ENCODE measurements at regions of chr10 and their contacts with region 1.

Region 1: GRCh38 chr10:61992671-61993668 is 91.5 kb downstream of the ARID5B start:
- DNase-seq: peak; percentile 74
- ATAC-seq: peak; percentile 50
- H3K4me3 Mint-ChIP-seq: peak overlapping the region; percentile 64
- H3K27ac Mint-ChIP-seq: peak overlapping the region; percentile 95
- H3K4me1 Mint-ChIP-seq: peaks cover 87% of the 10 kb centered on the region
- H3K27me3 Mint-ChIP-seq: no peaks in the 10 kb centered on the region

Region 2: GRCh38 chr10:61708846-61709245 is 284.1 kb before region 1 on chr10:
- CTCF ChIA-PET with region 1: no interaction called
- POLR2A ChIA-PET with region 1: no interaction called
- intact Hi-C with region 1: no loop called
- DNase-seq: no peak
- ATAC-seq: no peak
- H3K4me3 Mint-ChIP-seq: no peak overlapping the region
- H3K27ac Mint-ChIP-seq: no peak overlapping the region
- H3K4me1 Mint-ChIP-seq: no peaks in the 10 kb centered on the region
- H3K27me3 Mint-ChIP-seq: peaks cover 6% of the 10 kb centered on the region

Region 3: DNA sequence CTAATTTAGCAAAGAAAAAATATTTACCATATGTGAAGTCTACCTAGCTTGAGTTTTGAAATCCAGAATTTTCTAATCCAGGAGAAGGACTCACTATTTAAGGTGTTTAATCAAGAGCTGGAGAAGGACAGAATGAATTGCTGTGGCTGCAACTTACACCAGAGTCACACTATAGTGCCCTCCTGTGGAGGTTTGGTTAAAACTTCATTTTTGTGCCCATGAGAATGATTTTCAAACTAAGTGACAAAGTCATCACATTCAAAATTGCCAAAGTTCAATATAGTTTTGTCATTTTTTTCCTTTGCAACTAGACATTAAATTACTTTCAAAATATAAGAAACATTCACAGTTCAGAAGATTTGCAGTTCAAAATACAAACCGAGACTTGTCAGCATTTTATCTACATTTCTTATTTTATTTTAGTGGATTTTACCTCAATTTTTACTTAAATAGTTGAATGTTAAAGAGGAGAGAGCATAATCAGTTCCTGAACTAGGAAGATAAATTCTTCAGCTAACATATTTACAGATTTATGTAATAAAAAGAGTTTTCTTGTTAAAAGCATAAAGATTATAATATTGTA is 259.5 kb before region 1 on chr10:
- CTCF ChIA-PET with region 1: no interaction called
- POLR2A ChIA-PET with region 1: no interaction called
- intact Hi-C with region 1: no loop called
- DNase-seq: peak; percentile 19
- ATAC-seq: no peak
- H3K4me3 Mint-ChIP-seq: no peak overlapping the region
- H3K27ac Mint-ChIP-seq: no peak overlapping the region
- H3K4me1 Mint-ChIP-seq: no peaks in the 10 kb centered on the region
- H3K27me3 Mint-ChIP-seq: peaks cover 15% of the 10 kb centered on the region

Region 4: DNA sequence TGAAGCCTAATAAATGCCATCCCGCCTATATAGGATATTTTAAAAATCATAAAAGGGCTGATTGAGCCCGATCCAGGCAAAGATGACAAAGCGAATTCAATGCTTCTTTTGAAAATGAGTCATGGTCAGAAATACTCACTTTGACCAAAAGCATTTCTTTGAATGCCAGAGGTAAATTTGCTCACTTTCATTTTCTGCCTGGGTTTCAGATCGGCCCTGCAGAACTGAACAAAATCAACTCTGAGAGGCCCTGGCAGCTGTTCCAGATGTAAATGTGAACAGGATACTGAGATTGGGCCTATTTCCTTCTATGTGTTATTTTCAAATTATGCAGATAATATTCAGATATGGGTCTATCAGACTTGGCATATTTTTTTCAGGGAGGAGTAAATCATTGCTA is 206.2 kb before region 1 on chr10:
- CTCF ChIA-PET with region 1: no interaction called
- POLR2A ChIA-PET with region 1: no interaction called
- intact Hi-C with region 1: loop called in 1 of 2 experiments (anchors 10 kb)
- DNase-seq: peak; percentile 30
- ATAC-seq: peak; percentile 33
- H3K4me3 Mint-ChIP-seq: no peak overlapping the region
- H3K27ac Mint-ChIP-seq: no peak overlapping the region
- H3K4me1 Mint-ChIP-seq: peaks cover 47% of the 10 kb centered on the region
- H3K27me3 Mint-ChIP-seq: no peaks in the 10 kb centered on the region

Region 5: DNA sequence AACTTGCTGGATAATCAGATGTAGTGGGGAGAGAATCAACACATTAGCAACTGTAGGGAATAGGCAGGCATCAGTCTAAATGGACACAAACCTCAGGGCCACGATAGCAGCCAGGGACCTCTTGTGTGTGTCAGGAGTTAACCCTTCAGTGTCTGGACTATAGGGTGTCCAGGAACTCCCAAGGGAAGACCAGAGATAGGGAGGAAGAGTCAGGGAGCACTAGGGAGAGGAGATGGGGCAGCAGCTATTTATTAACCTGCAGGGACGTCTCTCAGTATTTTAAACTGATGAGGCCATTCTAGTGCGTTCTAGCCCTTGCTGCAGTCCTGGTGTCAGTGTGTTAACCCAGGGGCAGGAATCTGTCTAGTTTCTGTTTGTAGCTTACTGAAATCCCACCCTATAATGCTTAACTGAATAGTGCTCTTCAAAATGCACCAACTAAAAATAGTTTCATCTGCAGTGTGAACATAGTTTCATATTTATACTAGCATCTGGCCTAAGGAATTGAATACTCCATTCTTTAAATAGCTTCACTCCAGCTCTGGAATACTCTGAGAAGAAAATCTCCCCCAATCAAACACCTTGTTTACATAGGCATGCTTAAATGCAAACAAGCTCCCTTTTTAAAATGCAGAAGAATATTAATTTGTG is 28.8 kb before region 1 on chr10:
- CTCF ChIA-PET with region 1: no interaction called
- POLR2A ChIA-PET with region 1: interaction called, 4 read pairs
- intact Hi-C with region 1: loop called in 1 of 2 experiments (anchors 1 kb)
- DNase-seq: no peak
- ATAC-seq: no peak
- H3K4me3 Mint-ChIP-seq: no peak overlapping the region
- H3K27ac Mint-ChIP-seq: peak overlapping the region; percentile 73
- H3K4me1 Mint-ChIP-seq: peaks cover 92% of the 10 kb centered on the region
- H3K27me3 Mint-ChIP-seq: no peaks in the 10 kb centered on the region

Region 6: GRCh38 chr10:62019013-62019684 is 26.2 kb after region 1 on chr10:
- CTCF ChIA-PET with region 1: interaction called, 20 read pairs
- POLR2A ChIA-PET with region 1: interaction called, 10 read pairs
- intact Hi-C with region 1: loop called (anchors 1 to 2 kb)
- DNase-seq: no peak
- ATAC-seq: no peak
- H3K4me3 Mint-ChIP-seq: peak overlapping the region; percentile 11
- H3K27ac Mint-ChIP-seq: peak overlapping the region; percentile 100
- H3K4me1 Mint-ChIP-seq: peaks cover 88% of the 10 kb centered on the region
- H3K27me3 Mint-ChIP-seq: no peaks in the 10 kb centered on the region

Region 7: DNA sequence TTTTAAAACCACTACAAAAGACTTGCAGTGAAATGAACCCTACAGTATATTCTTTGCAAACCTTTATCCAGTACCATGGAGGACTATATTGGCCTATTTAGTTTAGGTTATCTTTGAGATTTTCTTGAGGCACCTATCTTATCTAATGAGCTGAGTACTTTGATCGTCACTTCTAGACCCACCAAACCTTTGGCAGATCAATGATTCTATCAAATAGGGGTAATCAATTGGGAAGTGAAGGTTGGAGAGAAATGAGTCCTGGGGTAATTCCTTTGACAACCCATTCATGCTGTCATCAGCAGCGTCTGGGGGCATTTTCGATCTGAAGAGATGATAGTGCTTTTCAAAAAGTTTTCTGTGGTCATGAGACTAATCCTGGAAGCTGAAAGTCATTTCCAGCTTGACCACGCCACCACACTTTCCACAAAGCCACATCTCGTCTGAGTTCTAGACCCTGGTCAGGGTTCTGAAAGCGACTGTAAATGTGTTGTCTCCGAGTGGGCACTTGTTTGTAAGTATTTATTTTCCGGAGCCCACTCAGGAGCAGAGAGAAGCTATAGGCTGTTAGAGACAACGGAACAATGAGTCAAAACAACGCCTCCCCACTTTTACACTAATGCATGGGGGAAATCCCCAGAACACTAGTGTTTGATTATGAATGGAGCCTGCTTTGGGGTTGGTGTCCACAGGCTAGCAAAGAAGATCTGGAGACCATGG is 818.3 kb after region 1 on chr10:
- CTCF ChIA-PET with region 1: no interaction called
- POLR2A ChIA-PET with region 1: no interaction called
- intact Hi-C with region 1: loop called (anchors 1 to 2 kb)
- DNase-seq: peak; percentile 93
- ATAC-seq: peak; percentile 48
- H3K4me3 Mint-ChIP-seq: peak overlapping the region; percentile 99
- H3K27ac Mint-ChIP-seq: peak overlapping the region; percentile 87
- H3K4me1 Mint-ChIP-seq: peaks cover 75% of the 10 kb centered on the region
- H3K27me3 Mint-ChIP-seq: no peaks in the 10 kb centered on the region